ENCODE measurements at regions of chr10 and their contacts with region 1.

Region 1: GRCh38 chr10:100997360-100998182 is 2.0 kb upstream of the LZTS2 start:
- DNase-seq: peak; percentile 55 to 80
- H3K4me3 ChIP-seq: peak overlapping the region; percentile 76
- H3K27ac ChIP-seq: 0 out of 2 replicates have a peak overlapping the region, but pooled peaks have one; percentile 0
- H3K4me1 ChIP-seq: peaks cover 11% of the 10 kb centered on the region
- H3K27me3 ChIP-seq: no peaks in the 10 kb centered on the region
- CTCF ChIP-seq: peak; percentile 84

Region 2: DNA sequence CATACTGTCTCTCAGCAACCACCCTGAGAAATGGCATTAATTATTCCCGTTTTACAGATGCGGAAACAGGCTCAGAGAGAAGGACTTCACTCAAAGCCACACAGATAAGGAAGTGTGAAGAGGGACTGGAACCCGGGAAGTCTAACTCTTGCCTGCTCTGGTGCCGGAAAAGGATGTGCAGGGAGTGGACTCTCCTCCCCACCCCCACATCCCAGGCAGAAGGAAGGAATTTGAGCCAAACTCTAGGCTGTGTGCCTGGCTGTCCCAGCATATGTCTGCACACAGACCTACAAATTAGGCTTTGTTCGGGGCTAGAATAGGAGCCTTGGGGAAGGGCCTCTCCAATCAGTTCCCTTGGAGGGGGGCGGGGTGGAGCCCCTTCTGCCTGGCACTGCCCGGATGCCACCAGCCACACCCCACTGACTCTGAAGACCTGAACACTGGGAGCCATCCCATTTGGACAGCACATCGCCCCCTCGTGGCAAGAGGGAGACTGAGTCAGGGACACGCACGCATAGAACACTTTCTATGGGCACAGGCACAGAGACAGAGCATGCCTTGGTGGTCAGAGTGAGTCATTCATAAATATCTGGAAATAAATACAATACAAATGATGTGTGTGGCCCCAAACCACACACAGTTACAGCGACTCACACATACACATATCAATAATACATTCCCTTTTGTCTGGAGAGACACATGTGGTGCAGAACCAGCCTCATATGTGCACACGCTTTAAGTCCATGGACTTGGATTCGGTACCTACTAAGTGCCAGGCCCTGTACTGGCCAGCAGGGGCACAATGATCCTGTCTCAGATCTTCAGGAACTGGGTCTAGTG is 15.2 kb after region 1 on chr10:
- CTCF ChIA-PET with region 1: interaction called, 6 read pairs
- POLR2A ChIA-PET with region 1: interaction called, 9 read pairs
- intact Hi-C with region 1: loop called (anchors 1 kb)
- DNase-seq: peak; percentile 67 to 76
- H3K4me3 ChIP-seq: no peak overlapping the region
- H3K27ac ChIP-seq: no peak overlapping the region
- H3K4me1 ChIP-seq: peaks cover 5% of the 10 kb centered on the region
- H3K27me3 ChIP-seq: no peaks in the 10 kb centered on the region
- CTCF ChIP-seq: peak; percentile 78

Region 3: DNA sequence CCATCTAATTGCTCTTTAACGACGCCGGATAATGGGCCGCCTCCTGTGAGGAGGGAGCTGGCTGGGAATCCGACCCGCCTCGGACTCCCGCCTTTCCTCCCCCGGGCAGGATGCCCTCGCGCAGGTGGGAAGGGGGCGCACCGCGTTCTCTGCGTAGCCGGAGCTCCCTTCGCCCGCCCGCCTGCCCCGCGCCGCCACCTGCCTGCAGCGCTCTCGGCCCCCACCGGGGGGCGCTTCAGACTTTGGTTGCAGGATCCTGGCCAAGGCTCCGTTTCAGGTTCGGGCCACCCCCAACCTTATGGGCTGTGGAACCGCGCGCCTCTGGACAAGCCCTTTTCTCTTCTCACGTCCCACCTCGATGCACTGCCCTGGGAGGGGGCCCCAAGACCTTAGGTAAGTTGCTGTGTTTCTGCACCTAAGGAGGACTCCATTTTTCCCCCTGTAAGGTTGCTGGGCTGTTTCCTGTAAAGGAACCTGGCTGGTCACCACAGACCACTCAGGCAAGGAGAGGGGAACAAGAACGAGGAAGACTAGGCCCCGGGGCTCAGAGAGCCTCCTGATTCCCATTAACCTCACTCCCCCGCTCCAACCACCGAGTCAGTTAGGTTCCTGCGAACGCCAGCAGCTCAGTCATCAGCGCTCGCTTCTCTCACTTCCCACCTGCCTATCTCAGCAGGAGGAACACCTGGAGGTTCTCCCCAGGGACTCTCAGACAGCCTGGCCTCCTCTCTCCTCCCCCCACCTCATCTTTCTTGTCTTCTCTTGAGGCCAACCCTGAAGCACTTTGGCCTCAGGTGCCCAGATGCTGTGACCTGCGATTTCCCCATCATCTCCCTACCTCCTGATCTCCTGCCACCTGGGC is 52.9 kb after region 1 on chr10:
- CTCF ChIA-PET with region 1: interaction called, 13 read pairs
- POLR2A ChIA-PET with region 1: no interaction called
- intact Hi-C with region 1: no loop called
- DNase-seq: peak in 1 of 2 experiments; percentile 67
- H3K4me3 ChIP-seq: peak overlapping the region; percentile 24; the same call in 1 of the 2 replicates
- H3K27ac ChIP-seq: no peak overlapping the region
- H3K4me1 ChIP-seq: peaks cover 4% of the 10 kb centered on the region; the same call in 1 of the 2 replicates
- H3K27me3 ChIP-seq: no peaks in the 10 kb centered on the region
- CTCF ChIP-seq: peak; percentile 82

Region 4: GRCh38 chr10:101060036-101060950 is 62.7 kb after region 1 on chr10:
- CTCF ChIA-PET with region 1: no interaction called
- POLR2A ChIA-PET with region 1: no interaction called
- intact Hi-C with region 1: loop called (anchors 2 kb)
- DNase-seq: peak; percentile 74 to 85
- H3K4me3 ChIP-seq: peak overlapping the region; percentile 62
- H3K27ac ChIP-seq: peak overlapping the region; percentile 86
- H3K4me1 ChIP-seq: peaks cover 19% of the 10 kb centered on the region
- H3K27me3 ChIP-seq: no peaks in the 10 kb centered on the region
- CTCF ChIP-seq: peak; percentile 85